CD8-positive, alpha-beta memory T cell (primary cell): ENCODE measurements at regions of chr17 and their contacts with region 1.

Region 1: DNA sequence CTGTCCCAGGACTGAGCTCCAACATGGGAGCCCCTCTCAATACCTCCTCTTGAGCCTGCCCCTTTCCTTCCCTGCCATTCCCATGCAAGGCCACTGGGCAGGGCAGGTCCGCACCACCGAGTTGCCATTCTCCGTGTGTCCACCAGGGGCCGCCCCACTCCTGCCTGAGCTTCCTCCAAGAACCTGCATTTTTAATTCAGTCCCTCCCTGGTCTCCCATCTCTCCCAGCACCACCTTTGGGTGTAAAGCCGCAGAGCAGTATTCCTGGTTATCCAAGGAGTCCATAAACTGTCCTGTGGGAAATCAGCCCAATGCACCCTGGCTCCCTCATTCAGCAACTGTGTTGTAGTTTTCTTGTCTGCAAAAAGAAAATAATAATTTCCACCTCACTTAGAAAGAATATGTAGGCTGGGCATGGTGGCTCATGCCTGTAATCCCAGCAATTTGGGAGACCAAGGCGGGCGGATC is 15.9 kb upstream of the ANKRD40CL start:
- DNase-seq: peak; percentile 67 to 81 (median 70)
- H3K4me3 ChIP-seq: no peak overlapping the region
- H3K4me3 Mint-ChIP-seq: peak overlapping the region in 4 of 7 donors; percentile 10 to 68 (median 34)
- H3K27ac ChIP-seq: no peak overlapping the region
- H3K27ac Mint-ChIP-seq: peak overlapping the region in 4 of 8 donors; percentile 16 to 65 (median 50)
- H3K4me1 ChIP-seq: peaks cover 15% of the 10 kb centered on the region
- H3K4me1 Mint-ChIP-seq: peaks cover 31 to 43% (median 41%) of the 10 kb centered on the region in 3 donors
- H3K27me3 ChIP-seq: no peaks in the 10 kb centered on the region
- H3K27me3 Mint-ChIP-seq: peaks cover 4 to 11% of the 10 kb centered on the region in 2 donors

Region 2: DNA sequence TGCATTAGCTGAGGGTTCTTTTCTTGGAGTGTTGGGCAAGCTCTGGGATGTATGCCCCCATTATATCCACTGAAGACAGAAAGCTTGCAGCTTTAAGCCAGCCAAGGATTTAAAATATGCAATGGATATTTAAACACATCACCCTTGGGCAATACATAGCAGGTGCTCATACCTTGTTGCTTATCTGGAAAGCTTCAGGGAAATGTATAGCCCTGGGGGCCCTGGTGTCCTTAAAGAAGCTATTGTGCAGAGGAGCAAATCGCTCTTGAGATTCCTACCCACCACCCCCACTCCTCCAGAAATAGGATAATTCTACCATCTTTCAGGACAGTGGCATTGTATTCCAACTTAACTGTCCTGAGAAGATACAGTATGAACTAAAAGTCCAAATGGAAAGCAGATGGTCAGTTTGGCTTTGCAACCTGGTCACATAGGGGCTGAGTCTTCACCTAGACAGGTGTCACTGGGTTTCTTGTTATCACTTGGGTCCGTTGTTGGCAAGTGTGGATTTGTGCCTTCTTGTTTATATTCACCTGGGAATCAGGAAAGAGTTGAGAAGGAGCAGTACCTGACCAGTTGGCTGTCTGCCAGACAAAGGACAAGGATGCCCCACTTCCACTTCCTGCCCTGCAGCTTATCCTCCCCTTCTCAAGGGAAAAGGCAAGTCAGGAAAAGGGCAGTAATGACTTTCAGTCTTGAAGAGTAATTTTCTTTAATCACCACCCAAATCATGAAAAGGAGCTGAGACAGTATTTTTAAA is 19.3 kb before region 1 on chr17:
- CTCF ChIA-PET with region 1: interaction called, 6 read pairs
- POLR2A ChIA-PET with region 1: interaction called, 11 read pairs
- DNase-seq: no peak
- H3K4me3 ChIP-seq: no peak overlapping the region
- H3K4me3 Mint-ChIP-seq: peak overlapping the region in 1 of 7 donors; percentile 79
- H3K27ac ChIP-seq: no peak overlapping the region
- H3K27ac Mint-ChIP-seq: no peak overlapping the region
- H3K4me1 ChIP-seq: no peaks in the 10 kb centered on the region
- H3K4me1 Mint-ChIP-seq: peaks cover 7 to 10% (median 7%) of the 10 kb centered on the region in 3 donors
- H3K27me3 ChIP-seq: no peaks in the 10 kb centered on the region
- H3K27me3 Mint-ChIP-seq: peaks cover 11 to 24% of the 10 kb centered on the region in 2 donors

Region 3: DNA sequence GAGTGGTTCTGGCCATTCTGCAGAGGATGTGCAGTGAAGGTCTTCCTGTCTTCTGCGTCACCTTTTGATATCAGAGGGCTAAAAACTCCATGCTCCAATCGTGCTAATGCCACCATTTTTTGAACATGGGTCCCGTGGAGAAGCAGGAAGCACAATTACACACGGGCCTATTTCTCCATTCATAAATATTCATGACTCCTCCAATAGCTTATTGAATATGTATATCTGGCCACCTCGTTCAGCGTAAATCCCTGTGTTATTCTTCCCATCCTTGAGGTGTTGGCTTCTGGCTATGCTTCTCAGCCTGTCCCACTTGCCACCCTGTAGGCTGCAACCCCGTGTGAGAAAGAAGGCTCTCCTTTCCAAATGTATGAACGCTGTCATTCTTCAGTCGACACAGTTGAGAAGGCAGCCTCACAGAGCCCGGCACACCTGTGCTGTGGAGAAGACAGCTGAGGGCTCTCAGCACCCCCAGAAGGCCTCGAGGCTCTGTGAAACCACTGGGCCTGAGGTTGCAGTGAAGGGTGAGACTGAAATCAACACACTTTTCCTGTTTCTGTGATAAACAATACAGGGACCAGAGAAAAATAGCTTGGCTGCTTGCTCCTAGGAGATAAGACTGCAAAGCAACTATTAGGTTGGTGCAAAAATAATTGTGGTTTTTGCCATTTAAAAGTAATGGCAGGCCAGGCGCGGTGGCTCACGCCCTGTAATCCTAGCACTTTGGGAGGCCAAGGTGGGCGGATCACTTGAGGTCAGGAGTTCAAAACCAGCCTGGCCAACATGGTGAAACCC is 11.0 kb before region 1 on chr17:
- CTCF ChIA-PET with region 1: interaction called, 13 read pairs
- POLR2A ChIA-PET with region 1: no interaction called
- DNase-seq: no peak
- H3K4me3 ChIP-seq: no peak overlapping the region
- H3K4me3 Mint-ChIP-seq: peak overlapping the region in 1 of 7 donors; percentile 13
- H3K27ac ChIP-seq: no peak overlapping the region
- H3K27ac Mint-ChIP-seq: peak overlapping the region in 1 of 8 donors; percentile 17
- H3K4me1 ChIP-seq: no peaks in the 10 kb centered on the region
- H3K4me1 Mint-ChIP-seq: peaks cover 3 to 7% (median 6%) of the 10 kb centered on the region in 3 donors
- H3K27me3 ChIP-seq: no peaks in the 10 kb centered on the region
- H3K27me3 Mint-ChIP-seq: peaks cover 7 to 15% of the 10 kb centered on the region in 2 donors

Region 4: DNA sequence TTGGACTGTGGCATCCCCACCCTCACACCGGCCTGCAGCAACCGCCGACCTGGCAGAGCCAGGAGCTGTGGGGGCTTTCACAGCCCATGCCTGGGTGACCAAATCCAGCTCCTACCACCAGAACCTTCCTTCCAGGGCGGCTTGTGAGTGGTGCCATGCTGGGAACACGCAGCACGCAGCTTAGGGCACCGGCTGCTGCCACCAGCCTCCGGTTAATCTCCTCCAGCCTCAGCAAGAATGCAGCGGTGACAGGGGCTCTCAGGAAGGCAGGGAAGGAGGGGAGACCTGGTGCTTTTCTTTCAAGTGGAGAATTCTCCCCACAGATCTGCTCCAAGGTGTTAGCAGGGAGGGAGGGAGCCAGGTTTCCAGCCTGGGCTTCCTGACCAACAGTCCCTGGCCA is 16.4 kb after region 1 on chr17:
- CTCF ChIA-PET with region 1: interaction called, 13 read pairs
- POLR2A ChIA-PET with region 1: no interaction called
- DNase-seq: no peak
- H3K4me3 ChIP-seq: no peak overlapping the region
- H3K4me3 Mint-ChIP-seq: no peak overlapping the region
- H3K27ac ChIP-seq: no peak overlapping the region
- H3K27ac Mint-ChIP-seq: no peak overlapping the region
- H3K4me1 ChIP-seq: no peaks in the 10 kb centered on the region
- H3K4me1 Mint-ChIP-seq: no peaks in the 10 kb centered on the region
- H3K27me3 ChIP-seq: no peaks in the 10 kb centered on the region
- H3K27me3 Mint-ChIP-seq: peaks cover 0 to 2% of the 10 kb centered on the region in 2 donors

Region 5: DNA sequence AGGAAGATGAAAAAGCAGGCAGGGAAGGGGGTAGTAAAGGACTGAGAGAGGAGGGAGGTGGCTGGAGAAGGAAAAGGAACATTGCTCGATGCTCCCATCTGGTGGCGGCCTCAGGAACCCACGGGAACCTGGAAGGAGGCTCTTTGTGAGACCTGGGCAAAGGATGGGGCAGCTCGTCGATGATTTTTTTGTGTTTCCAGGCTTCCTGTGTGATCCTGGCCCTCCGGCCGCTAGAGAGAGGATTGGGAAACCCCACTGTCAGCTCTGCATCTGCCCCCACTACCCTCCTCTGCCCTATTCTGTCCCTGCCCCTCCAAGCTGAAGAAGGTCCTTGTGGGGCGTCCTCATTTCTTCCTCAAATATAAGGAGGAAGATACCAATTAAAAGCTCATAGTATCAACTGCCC is 58.7 kb after region 1 on chr17:
- CTCF ChIA-PET with region 1: interaction called, 19 read pairs
- POLR2A ChIA-PET with region 1: no interaction called
- DNase-seq: peak in 3 of 5 donors; percentile 14 to 61 (median 32)
- H3K4me3 ChIP-seq: no peak overlapping the region
- H3K4me3 Mint-ChIP-seq: no peak overlapping the region
- H3K27ac ChIP-seq: no peak overlapping the region
- H3K27ac Mint-ChIP-seq: no peak overlapping the region
- H3K4me1 ChIP-seq: no peaks in the 10 kb centered on the region
- H3K4me1 Mint-ChIP-seq: peaks cover 0 to 6% (median 0%) of the 10 kb centered on the region in 3 donors
- H3K27me3 ChIP-seq: no peaks in the 10 kb centered on the region
- H3K27me3 Mint-ChIP-seq: peaks cover 0 to 1% of the 10 kb centered on the region in 2 donors

Region 6: GRCh38 chr17:50853015-50853615 is 69.9 kb after region 1 on chr17:
- CTCF ChIA-PET with region 1: interaction called, 22 read pairs
- POLR2A ChIA-PET with region 1: interaction called, 4 read pairs
- DNase-seq: no peak
- H3K4me3 ChIP-seq: no peak overlapping the region
- H3K4me3 Mint-ChIP-seq: peak overlapping the region in 4 of 7 donors; percentile 68 to 86 (median 84)
- H3K27ac ChIP-seq: no peak overlapping the region
- H3K27ac Mint-ChIP-seq: peak overlapping the region in 6 of 8 donors; percentile 59 to 93 (median 84)
- H3K4me1 ChIP-seq: peaks cover 8% of the 10 kb centered on the region
- H3K4me1 Mint-ChIP-seq: peaks cover 11 to 15% (median 14%) of the 10 kb centered on the region in 3 donors
- H3K27me3 ChIP-seq: no peaks in the 10 kb centered on the region
- H3K27me3 Mint-ChIP-seq: peaks cover 0 to 4% of the 10 kb centered on the region in 2 donors

Region 7: GRCh38 chr17:50949989-50950881 is 167.0 kb after region 1 on chr17:
- CTCF ChIA-PET with region 1: interaction called, 17 read pairs
- POLR2A ChIA-PET with region 1: interaction called, 3 read pairs
- DNase-seq: peak; percentile 27 to 74 (median 40)
- H3K4me3 ChIP-seq: no peak overlapping the region
- H3K4me3 Mint-ChIP-seq: no peak overlapping the region
- H3K27ac ChIP-seq: peak overlapping the region; percentile 28
- H3K27ac Mint-ChIP-seq: peak overlapping the region in 2 of 8 donors; percentile 2 to 92
- H3K4me1 ChIP-seq: peaks cover 15% of the 10 kb centered on the region
- H3K4me1 Mint-ChIP-seq: peaks cover 8 to 23% (median 22%) of the 10 kb centered on the region in 3 donors
- H3K27me3 ChIP-seq: no peaks in the 10 kb centered on the region
- H3K27me3 Mint-ChIP-seq: no peaks in the 10 kb centered on the region

Region 8: GRCh38 chr17:50966163-50966666 is 183.0 kb after region 1 on chr17:
- CTCF ChIA-PET with region 1: no interaction called
- POLR2A ChIA-PET with region 1: no interaction called
- DNase-seq: no peak
- H3K4me3 ChIP-seq: no peak overlapping the region
- H3K4me3 Mint-ChIP-seq: no peak overlapping the region
- H3K27ac ChIP-seq: no peak overlapping the region
- H3K27ac Mint-ChIP-seq: peak overlapping the region in 3 of 8 donors; percentile 26 to 51 (median 29)
- H3K4me1 ChIP-seq: no peaks in the 10 kb centered on the region
- H3K4me1 Mint-ChIP-seq: peaks cover 3 to 8% (median 7%) of the 10 kb centered on the region in 3 donors
- H3K27me3 ChIP-seq: no peaks in the 10 kb centered on the region
- H3K27me3 Mint-ChIP-seq: no peaks in the 10 kb centered on the region